ENCODE measurements at regions of chr9 and their contacts with region 1.

Region 1: DNA sequence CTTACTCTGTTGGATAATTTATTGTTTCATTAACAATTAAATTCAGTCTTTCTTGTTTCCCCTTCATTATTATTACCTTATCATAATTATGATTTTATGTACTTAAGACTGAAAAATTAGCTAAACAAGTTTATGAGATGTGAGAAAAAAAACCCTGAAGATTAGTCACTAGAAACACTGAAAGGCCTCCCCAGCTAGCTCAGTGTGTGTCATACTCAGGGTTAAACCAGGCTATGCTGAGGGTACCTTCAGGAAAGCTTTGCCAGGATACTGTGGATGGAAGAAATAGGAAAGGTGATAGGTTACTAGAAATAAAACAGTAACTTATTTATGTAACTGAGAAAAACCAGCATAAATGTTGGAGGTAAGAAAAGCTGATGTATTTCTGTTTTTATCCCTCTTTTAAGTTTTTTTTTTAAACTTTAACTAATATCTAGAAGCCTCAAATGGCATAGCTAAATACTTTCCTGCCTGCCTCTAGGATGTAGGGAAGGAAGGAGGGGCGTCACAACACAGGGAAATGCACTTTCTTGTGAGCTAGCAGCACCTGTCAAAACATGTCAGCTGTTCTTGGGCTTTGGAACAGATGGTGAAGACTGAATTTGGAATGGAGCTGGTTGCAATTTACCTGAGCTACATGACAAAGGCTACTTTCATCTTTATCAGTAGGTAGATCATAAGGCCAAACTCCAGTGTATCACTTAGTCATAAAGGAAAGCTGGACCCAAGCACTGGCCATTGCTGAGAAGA is 24.2 kb downstream of the NMRK1 start:
- DNase-seq: peak; percentile 55
- H3K27ac ChIP-seq: no peak overlapping the region
- CTCF ChIP-seq: no peak

Region 2: GRCh38 chr9:74236857-74237256 is 826.9 kb before region 1 on chr9:
- CTCF ChIA-PET with region 1: no interaction called
- POLR2A ChIA-PET with region 1: no interaction called
- DNase-seq: no peak
- H3K27ac ChIP-seq: no peak overlapping the region
- CTCF ChIP-seq: no peak

Region 3: DNA sequence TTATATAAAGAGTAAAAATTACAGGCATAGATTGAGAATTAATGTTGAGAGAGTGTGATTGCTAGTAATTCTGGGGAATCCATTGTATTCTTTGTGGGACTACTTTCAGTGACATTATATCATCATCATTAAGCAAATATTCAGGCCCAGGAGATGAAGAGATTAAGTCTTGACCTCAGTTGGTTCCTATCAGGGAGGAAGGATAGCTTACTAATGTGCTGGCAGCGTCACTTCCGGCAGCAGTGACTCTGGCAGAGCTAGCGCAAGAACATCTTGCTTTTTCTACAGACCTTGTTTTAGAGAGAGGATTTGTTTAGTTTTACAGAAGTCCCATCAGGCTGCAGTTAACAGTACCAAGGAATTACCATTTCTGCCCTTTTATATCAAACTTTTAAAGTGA is 44.8 kb after region 1 on chr9:
- CTCF ChIA-PET with region 1: no interaction called
- POLR2A ChIA-PET with region 1: no interaction called
- DNase-seq: no peak
- H3K27ac ChIP-seq: no peak overlapping the region
- CTCF ChIP-seq: no peak

Region 4: GRCh38 chr9:75658301-75658910 is 594.7 kb after region 1 on chr9:
- CTCF ChIA-PET with region 1: interaction called, 10 read pairs
- POLR2A ChIA-PET with region 1: no interaction called
- DNase-seq: no peak
- H3K27ac ChIP-seq: no peak overlapping the region
- CTCF ChIP-seq: no peak

Measured in RWPE1 (cell line).